Naive thymus-derived CD4-positive, alpha-beta T cell (primary cell): ENCODE measurements at regions of chr2 and their contacts with region 1.

Region 1: DNA sequence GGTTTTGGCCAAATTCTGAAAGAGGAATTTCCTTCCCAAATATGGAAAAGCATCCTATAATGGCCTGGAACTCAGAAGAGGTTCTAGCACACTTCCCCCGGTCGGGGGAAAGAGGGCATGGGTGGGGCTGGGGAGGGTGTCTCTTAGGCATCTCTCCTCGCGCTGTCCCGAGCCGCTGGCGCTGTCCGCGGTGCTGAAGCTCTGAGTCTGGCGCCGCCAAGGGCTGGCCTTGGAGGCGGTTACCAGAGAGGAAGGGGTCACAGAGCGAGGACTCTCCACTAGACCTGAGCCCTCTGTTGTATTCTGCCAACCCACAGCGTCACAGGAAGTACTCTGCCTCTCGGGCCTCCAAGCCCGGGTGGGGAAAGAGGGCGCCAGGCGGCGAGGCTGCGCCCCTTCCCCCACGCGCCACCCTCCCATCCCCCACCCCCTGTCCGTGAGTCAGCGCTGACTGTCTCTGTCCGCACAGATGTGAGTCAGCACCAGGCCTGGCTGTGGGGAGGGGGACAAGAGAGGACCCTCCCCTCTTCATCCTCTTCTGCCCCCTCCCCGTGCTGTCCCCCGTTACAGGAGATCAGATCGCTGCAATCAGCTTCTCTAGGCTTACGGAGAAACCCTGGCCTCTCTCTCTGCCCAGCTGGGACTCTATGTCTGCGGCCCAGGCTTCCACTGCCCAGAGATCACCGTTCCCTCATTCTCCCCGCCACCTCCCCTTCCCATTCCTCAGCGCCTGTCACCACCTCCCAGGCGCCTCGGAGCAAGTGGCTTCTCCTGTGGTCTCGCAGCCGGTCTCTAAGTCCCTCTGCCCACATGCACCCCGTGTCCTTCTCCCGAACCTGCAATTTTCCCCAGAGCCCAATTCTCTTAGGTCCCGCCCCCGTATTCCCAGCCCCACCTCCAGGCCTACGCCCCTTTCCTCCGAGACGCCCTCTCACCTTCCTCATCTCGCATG is 783 bp downstream of the PTPRN start:
- DNase-seq: peak; percentile 38 to 79 (median 60)
- ATAC-seq: peak; percentile 87
- H3K4me3 ChIP-seq: no peak overlapping the region
- H3K4me3 Mint-ChIP-seq: no peak overlapping the region
- H3K27ac ChIP-seq: no peak overlapping the region
- H3K27ac Mint-ChIP-seq: peak overlapping the region in 1 of 9 donors; percentile 14
- H3K4me1 ChIP-seq: no peaks in the 10 kb centered on the region
- H3K4me1 Mint-ChIP-seq: peaks cover 0 to 8% (median 0%) of the 10 kb centered on the region in 7 donors
- H3K27me3 ChIP-seq: peaks cover 2 to 15% of the 10 kb centered on the region in 2 donors
- H3K27me3 Mint-ChIP-seq: peaks cover 54 to 64% (median 61%) of the 10 kb centered on the region in 5 donors

Region 2: GRCh38 chr2:218962859-218963492 is 345.4 kb before region 1 on chr2:
- CTCF ChIA-PET with region 1: no interaction called
- POLR2A ChIA-PET with region 1: no interaction called
- intact Hi-C with region 1: loop called in 1 of 2 experiments (anchors 5 kb)
- DNase-seq: peak in 7 of 9 donors; percentile 46 to 71 (median 57)
- ATAC-seq: no peak
- H3K4me3 ChIP-seq: no peak overlapping the region
- H3K4me3 Mint-ChIP-seq: peak overlapping the region in 1 of 10 donors; percentile 6
- H3K27ac ChIP-seq: no peak overlapping the region
- H3K27ac Mint-ChIP-seq: no peak overlapping the region
- H3K4me1 ChIP-seq: peaks cover 3 to 8% of the 10 kb centered on the region in 2 donors
- H3K4me1 Mint-ChIP-seq: peaks cover 6 to 26% (median 13%) of the 10 kb centered on the region in 7 donors
- H3K27me3 ChIP-seq: peaks cover 17 to 37% of the 10 kb centered on the region in 2 donors
- H3K27me3 Mint-ChIP-seq: peaks cover 65 to 74% (median 69%) of the 10 kb centered on the region in 5 donors

Region 3: DNA sequence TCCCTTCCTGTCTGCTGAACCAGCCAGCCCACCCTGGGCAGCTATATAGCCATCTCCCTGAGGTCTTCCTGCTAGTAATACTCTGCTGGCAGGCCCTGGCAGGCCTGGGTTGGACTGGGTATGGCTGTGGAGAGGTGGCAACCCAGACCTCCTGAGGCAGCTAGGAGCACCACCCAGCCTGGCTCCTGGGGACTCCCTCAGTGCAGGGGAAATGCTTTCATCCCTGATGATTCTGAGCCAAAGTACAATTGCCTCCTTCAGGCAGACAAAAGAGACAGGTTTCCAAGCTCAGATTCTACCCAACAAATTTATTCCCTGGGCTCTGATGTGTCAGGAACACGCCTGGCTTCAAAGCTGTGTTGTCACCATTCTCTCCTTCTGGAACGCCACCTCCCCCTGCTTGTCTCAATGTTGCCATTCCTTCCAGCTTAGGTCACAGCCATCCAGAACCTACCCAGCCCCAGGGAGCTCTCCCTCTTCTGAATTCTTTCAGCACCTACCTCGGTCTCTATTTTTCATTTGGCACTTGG is 34.0 kb before region 1 on chr2:
- CTCF ChIA-PET with region 1: no interaction called
- POLR2A ChIA-PET with region 1: no interaction called
- intact Hi-C with region 1: no loop called
- DNase-seq: no peak
- ATAC-seq: no peak
- H3K4me3 ChIP-seq: no peak overlapping the region
- H3K4me3 Mint-ChIP-seq: no peak overlapping the region
- H3K27ac ChIP-seq: no peak overlapping the region
- H3K27ac Mint-ChIP-seq: no peak overlapping the region
- H3K4me1 ChIP-seq: peaks cover 13 to 17% of the 10 kb centered on the region in 2 donors
- H3K4me1 Mint-ChIP-seq: peaks cover 15 to 22% (median 22%) of the 10 kb centered on the region in 7 donors
- H3K27me3 ChIP-seq: no peaks in the 10 kb centered on the region
- H3K27me3 Mint-ChIP-seq: peaks cover 0 to 11% (median 0%) of the 10 kb centered on the region in 5 donors

Region 4: DNA sequence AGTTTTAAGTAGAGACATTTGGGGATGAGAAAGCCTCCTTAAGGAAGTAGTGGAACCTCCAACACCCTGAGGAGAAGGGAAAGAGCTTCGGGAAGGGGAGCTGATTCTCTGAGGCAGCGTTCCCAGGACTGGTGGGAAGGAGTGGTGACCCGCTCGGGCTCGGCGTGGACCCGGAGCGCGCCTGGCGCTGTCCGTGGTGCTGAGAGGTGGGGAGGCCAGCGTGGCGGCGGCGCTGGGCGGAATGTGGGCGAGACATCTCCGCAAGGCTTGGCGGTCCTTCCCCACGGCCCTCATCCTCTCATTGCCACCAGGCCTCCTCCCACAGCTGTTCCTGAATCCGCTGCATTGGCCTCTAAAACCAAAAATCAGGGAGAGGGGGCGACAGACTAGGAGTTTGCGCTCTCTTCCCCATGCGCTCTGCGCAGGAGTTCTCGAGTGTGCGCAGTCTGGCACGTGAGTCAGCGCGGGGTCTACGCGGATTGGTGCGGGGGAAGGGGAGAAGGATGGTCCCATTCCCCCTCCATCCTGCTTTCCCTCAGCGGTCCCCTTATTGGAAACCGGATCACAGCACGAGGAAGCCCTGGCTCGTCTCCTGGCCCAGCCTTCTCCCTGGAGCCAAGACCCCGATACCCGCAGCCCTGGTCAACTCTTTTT is 23.3 kb after region 1 on chr2:
- CTCF ChIA-PET with region 1: no interaction called
- POLR2A ChIA-PET with region 1: no interaction called
- intact Hi-C with region 1: loop called (anchors 1 to 2 kb)
- DNase-seq: peak in 6 of 9 donors; percentile 6 to 58 (median 21)
- ATAC-seq: no peak
- H3K4me3 ChIP-seq: no peak overlapping the region
- H3K4me3 Mint-ChIP-seq: peak overlapping the region in 2 of 10 donors; percentile 66 to 67
- H3K27ac ChIP-seq: no peak overlapping the region
- H3K27ac Mint-ChIP-seq: no peak overlapping the region
- H3K4me1 ChIP-seq: no peaks in the 10 kb centered on the region
- H3K4me1 Mint-ChIP-seq: peaks cover 0 to 9% (median 5%) of the 10 kb centered on the region in 7 donors
- H3K27me3 ChIP-seq: peaks cover 0 to 10% of the 10 kb centered on the region in 2 donors
- H3K27me3 Mint-ChIP-seq: peaks cover 59 to 84% (median 71%) of the 10 kb centered on the region in 5 donors

Region 5: GRCh38 chr2:219352448-219353023 is 44.1 kb after region 1 on chr2:
- CTCF ChIA-PET with region 1: no interaction called
- POLR2A ChIA-PET with region 1: no interaction called
- intact Hi-C with region 1: loop called in 1 of 2 experiments (anchors 5 kb)
- DNase-seq: peak; percentile 25 to 66 (median 58)
- ATAC-seq: peak; percentile 87
- H3K4me3 ChIP-seq: no peak overlapping the region
- H3K4me3 Mint-ChIP-seq: no peak overlapping the region
- H3K27ac ChIP-seq: no peak overlapping the region
- H3K27ac Mint-ChIP-seq: no peak overlapping the region
- H3K4me1 ChIP-seq: no peaks in the 10 kb centered on the region
- H3K4me1 Mint-ChIP-seq: no peaks in the 10 kb centered on the region
- H3K27me3 ChIP-seq: no peaks in the 10 kb centered on the region
- H3K27me3 Mint-ChIP-seq: peaks cover 43 to 64% (median 48%) of the 10 kb centered on the region in 5 donors